IMR-90 (cell line): ENCODE measurements at regions of chr4 and their contacts with region 1.

Region 1: DNA sequence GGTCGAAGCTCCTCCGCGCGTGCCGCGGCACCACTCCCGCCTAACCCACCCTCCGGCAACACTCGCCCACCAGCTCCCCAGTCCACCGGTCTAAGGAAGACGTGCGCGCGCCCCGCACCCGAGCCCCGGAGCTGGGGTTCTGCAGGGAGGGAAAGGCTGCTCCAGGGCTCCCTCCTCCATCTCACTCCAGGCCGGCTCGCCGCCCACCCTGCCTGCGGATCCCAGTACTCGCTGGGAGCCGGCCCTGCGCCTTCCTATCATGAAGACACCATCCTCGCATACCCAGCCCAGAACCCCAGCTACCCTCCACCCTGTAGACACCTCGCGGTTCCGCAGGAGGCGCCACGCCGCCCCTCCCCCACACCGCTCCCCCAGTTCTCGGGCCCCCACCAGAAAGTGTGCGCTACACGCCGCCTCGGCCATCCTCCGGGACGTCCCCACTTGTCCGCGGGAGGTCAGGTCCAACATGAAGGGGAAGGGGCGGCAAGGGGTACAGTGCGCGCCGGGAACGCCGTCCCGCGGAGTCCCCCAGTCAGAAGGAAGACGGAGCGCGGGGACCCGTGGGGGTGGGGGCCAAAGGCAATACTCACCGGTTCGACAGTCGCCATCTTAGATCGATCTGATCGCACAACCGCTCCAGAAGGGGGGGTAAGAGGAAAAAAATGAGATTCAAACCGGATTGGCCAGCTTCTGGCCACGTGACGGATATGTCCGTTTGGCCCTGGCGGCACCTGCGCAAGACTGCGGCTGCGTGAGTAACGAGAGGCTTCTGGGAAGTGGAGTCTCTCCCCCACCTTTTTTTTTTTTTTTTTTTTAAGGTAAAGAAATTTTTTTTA is at the start of gene EIF4E:
- DNase-seq: peak; percentile 99
- ATAC-seq: peak; percentile 80
- H3K4me3 ChIP-seq: peak within 1 kb of the TSS; percentile 85
- H3K27ac ChIP-seq: peak within 1 kb of the TSS; percentile 94
- H3K4me1 ChIP-seq: peaks cover 3% of the 10 kb centered on the region; the same call in 1 of the 2 replicates
- H3K27me3 ChIP-seq: no peaks in the 10 kb centered on the region
- CTCF ChIP-seq: 0 out of 2 replicates have a peak, but pooled peaks have one; percentile 20
- POLR2A ChIP-seq: 0 out of 2 replicates have a peak, but pooled peaks have one; percentile 60
- RAD21 ChIP-seq: no peak
- total RNA-seq, gene EIF4E: 113 and 288 TPM in 2 replicates

Region 2: DNA sequence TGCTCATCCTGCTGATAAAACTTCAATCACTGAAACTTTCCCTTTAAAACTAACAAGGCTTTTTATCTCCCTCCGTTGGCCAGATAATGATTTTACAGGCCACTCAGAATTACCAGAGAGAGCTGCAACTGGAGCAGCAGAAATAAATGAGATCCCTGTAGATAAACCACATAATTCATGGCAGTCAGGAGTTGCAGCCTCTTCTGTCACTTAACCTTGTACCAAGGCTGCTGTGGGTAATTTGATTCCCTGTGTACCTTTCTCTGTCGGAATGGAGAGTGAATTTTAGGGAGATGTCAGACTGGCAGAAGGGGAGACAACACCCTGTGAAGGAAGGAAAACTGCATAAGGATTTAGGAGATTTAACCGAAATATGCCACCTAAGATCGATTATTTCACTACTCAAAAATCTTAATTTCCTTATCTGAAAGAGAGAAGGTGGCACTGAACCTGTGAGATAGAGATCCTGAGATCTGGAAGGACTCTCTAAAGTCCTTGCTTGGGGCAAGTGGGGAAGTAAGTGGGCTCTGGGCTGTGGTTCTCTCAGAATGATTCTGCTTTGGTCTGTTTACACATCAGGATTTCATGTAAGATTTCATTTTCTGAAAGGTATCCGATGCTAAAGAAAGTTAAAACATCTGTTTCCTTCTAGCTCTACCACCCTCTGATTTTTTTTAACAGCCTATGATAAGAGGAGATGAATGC is 256.0 kb before region 1 on chr4:
- CTCF ChIA-PET with region 1: no interaction called
- POLR2A ChIA-PET with region 1: no interaction called
- dilution Hi-C with region 1: no loop called
- in situ Hi-C with region 1: no loop called
- intact Hi-C with region 1: no loop called
- DNase-seq: no peak
- ATAC-seq: 0 out of 2 replicates have a peak, but pooled peaks have one; percentile 40
- H3K4me3 ChIP-seq: no peak overlapping the region
- H3K27ac ChIP-seq: no peak overlapping the region
- H3K4me1 ChIP-seq: 0 out of 2 replicates have a peak, but pooled peaks cover 3% of the 10 kb centered on the region
- H3K27me3 ChIP-seq: no peaks in the 10 kb centered on the region
- CTCF ChIP-seq: no peak
- POLR2A ChIP-seq: no peak
- RAD21 ChIP-seq: no peak

Region 3: GRCh38 chr4:98778206-98778605 is 150.5 kb before region 1 on chr4:
- CTCF ChIA-PET with region 1: no interaction called
- POLR2A ChIA-PET with region 1: no interaction called
- dilution Hi-C with region 1: no loop called
- in situ Hi-C with region 1: no loop called
- intact Hi-C with region 1: loop called (anchors 2 kb)
- DNase-seq: peak; percentile 91
- ATAC-seq: peak; percentile 71
- H3K4me3 ChIP-seq: no peak overlapping the region
- H3K27ac ChIP-seq: no peak overlapping the region
- H3K4me1 ChIP-seq: peaks cover 17% of the 10 kb centered on the region
- H3K27me3 ChIP-seq: peaks cover 12% of the 10 kb centered on the region
- CTCF ChIP-seq: no peak
- POLR2A ChIP-seq: no peak
- RAD21 ChIP-seq: no peak

Region 4: GRCh38 chr4:99078931-99079624 is 150.4 kb after region 1 on chr4:
- CTCF ChIA-PET with region 1: no interaction called
- POLR2A ChIA-PET with region 1: no interaction called
- dilution Hi-C with region 1: no loop called
- in situ Hi-C with region 1: no loop called
- intact Hi-C with region 1: no loop called
- DNase-seq: no peak
- ATAC-seq: peak; percentile 54
- H3K4me3 ChIP-seq: no peak overlapping the region
- H3K27ac ChIP-seq: no peak overlapping the region
- H3K4me1 ChIP-seq: no peaks in the 10 kb centered on the region; the same call in 1 of the 2 replicates
- H3K27me3 ChIP-seq: no peaks in the 10 kb centered on the region
- CTCF ChIP-seq: no peak
- POLR2A ChIP-seq: no peak
- RAD21 ChIP-seq: no peak